ENCODE measurements at regions of chr19 and their contacts with region 1.

Region 1: GRCh38 chr19:55369671-55370304 is 475 bp downstream of the IL11 start:
- DNase-seq: peak; percentile 77
- H3K4me3 ChIP-seq: peak overlapping the region; percentile 45
- H3K27ac ChIP-seq: no peak overlapping the region
- H3K4me1 ChIP-seq: no peaks in the 10 kb centered on the region
- H3K27me3 ChIP-seq: peaks cover 15% of the 10 kb centered on the region
- CTCF ChIP-seq: no peak

Region 2: GRCh38 chr19:55206664-55207500 is 162.9 kb before region 1 on chr19:
- CTCF ChIA-PET with region 1: interaction called, 10 read pairs
- POLR2A ChIA-PET with region 1: no interaction called
- intact Hi-C with region 1: no loop called
- DNase-seq: peak; percentile 74
- H3K4me3 ChIP-seq: no peak overlapping the region
- H3K27ac ChIP-seq: no peak overlapping the region
- H3K4me1 ChIP-seq: no peaks in the 10 kb centered on the region
- H3K27me3 ChIP-seq: no peaks in the 10 kb centered on the region
- CTCF ChIP-seq: no peak

Region 3: DNA sequence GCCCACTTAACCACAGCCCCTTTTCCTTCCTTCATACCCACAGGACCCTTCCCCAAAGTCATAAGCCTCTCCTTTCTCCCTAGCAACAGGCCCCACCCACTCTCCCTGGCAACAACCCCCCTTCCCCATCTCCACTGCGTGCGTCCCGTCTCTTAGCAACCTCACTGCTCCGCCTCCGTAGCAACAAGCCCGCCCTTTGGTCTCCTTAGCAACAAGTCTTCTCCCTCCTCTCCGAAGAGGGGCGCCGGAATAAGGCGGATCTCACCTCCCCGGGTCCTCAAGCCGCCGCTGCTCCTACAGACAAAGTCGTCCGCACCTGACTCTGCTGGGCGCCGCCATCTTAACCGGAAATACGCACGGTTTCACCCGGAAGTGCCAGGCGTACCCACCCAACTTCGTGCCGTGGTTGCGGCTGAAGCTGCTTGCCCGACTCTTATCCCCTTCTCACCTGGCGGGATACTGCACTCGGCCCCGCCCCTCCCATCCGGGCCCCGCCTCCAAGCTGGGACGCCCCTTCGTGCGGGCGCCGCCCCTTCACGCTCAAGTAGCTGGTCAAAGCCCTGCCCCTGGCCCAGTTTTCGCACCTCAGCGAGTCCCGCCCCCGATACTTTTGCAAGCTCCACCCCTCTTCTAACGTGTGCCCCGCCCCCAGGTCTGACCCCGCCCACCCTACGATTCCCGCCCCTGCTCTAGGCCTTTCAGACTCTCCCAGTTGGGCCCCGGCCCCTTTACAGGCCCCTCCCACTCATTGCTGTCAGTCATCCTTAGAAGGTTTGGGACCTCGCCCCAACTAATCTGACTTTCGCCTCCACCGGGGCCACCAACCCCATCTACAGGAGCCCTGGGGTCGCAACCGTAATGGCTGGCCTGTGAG is 89.8 kb before region 1 on chr19 and contains the start of gene HSPBP1:
- CTCF ChIA-PET with region 1: no interaction called
- POLR2A ChIA-PET with region 1: no interaction called
- intact Hi-C with region 1: no loop called
- DNase-seq: peak; percentile 98
- H3K4me3 ChIP-seq: peak within 1 kb of the TSS; percentile 74
- H3K27ac ChIP-seq: peak within 1 kb of the TSS; percentile 84
- H3K4me1 ChIP-seq: peaks cover 12% of the 10 kb centered on the region
- H3K27me3 ChIP-seq: no peaks in the 10 kb centered on the region
- CTCF ChIP-seq: no peak
- total RNA-seq, gene HSPBP1: 80.3 and 83.4 TPM in 2 replicates

Region 4: DNA sequence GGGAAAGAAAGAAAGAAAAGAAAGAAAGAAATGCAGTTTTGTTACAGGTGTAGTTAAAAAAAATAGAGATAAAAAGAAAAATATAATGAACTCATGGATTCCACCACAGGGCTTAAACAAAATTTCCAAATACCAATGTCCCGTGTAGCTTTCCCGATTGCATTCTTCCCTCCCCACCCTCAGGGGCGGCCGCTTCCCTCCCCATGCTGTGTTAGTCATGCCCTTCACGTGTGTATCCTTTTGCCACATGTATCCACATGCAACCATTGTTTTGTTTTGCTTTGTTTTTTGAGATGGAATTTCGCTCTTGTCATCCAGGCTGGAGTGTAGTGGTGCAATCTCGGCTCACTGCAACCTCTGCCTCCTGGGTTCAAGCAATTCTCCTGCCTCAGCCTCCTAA is 33.7 kb before region 1 on chr19:
- CTCF ChIA-PET with region 1: no interaction called
- POLR2A ChIA-PET with region 1: no interaction called
- intact Hi-C with region 1: no loop called
- DNase-seq: no peak
- H3K4me3 ChIP-seq: no peak overlapping the region
- H3K27ac ChIP-seq: no peak overlapping the region
- H3K4me1 ChIP-seq: peaks cover 8% of the 10 kb centered on the region
- H3K27me3 ChIP-seq: no peaks in the 10 kb centered on the region
- CTCF ChIP-seq: no peak

Region 5: GRCh38 chr19:55526216-55527196 is 156.7 kb after region 1 on chr19:
- CTCF ChIA-PET with region 1: no interaction called
- POLR2A ChIA-PET with region 1: no interaction called
- intact Hi-C with region 1: no loop called
- DNase-seq: peak; percentile 21
- H3K4me3 ChIP-seq: no peak overlapping the region
- H3K27ac ChIP-seq: no peak overlapping the region
- H3K4me1 ChIP-seq: no peaks in the 10 kb centered on the region
- H3K27me3 ChIP-seq: no peaks in the 10 kb centered on the region
- CTCF ChIP-seq: no peak

Measured in A673 (cell line).